Dendritic cell treated with granulocyte-macrophage colony-stimulating factor and Interleukin-4, amounts not matched to agents 40 ng/mL and 50 ng/mL, for 4 days (primary cell): ENCODE measurements at regions of chr11 and their contacts with region 1.

Region 1: DNA sequence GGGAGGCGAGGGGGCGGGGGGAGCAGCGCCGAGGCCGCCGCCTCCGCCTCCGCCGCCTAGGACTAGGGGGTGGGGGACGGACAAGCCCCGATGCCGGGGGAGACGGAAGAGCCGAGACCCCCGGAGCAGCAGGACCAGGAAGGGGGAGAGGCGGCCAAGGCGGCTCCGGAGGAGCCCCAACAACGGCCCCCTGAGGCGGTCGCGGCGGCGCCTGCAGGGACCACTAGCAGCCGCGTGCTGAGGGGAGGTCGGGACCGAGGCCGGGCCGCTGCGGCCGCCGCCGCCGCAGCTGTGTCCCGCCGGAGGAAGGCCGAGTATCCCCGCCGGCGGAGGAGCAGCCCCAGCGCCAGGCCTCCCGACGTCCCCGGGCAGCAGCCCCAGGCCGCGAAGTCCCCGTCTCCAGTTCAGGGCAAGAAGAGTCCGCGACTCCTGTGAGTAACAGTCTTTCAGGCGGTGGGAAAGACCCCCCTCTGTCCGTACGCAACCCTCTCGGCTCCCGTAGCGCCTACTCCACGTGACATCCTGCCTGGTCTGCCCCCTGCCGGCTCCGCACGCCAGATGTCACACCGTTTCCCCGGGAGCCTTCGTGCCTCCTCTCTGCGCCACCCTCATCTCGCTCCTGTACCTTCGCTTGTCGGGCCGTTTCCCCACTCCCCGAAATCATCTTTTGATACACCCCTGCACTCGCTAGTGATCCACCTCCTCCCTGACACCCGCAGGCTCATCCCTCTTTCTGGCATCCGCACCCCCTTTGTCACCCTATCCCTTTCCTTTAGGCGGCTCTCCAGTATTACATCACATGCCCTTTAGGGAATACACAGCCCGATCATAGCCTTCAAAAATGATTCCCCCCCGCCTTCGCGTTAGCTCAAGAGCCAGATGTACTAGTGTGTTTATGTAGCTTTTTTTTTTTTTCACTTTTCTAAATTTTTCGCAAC is 598 bp downstream of the ZFP91 start:
- H3K4me3 Mint-ChIP-seq: peak overlapping the region; percentile 100
- H3K27ac Mint-ChIP-seq: peak overlapping the region; percentile 99
- H3K4me1 Mint-ChIP-seq: peaks cover 36% of the 10 kb centered on the region
- H3K27me3 Mint-ChIP-seq: no peaks in the 10 kb centered on the region

Region 2: DNA sequence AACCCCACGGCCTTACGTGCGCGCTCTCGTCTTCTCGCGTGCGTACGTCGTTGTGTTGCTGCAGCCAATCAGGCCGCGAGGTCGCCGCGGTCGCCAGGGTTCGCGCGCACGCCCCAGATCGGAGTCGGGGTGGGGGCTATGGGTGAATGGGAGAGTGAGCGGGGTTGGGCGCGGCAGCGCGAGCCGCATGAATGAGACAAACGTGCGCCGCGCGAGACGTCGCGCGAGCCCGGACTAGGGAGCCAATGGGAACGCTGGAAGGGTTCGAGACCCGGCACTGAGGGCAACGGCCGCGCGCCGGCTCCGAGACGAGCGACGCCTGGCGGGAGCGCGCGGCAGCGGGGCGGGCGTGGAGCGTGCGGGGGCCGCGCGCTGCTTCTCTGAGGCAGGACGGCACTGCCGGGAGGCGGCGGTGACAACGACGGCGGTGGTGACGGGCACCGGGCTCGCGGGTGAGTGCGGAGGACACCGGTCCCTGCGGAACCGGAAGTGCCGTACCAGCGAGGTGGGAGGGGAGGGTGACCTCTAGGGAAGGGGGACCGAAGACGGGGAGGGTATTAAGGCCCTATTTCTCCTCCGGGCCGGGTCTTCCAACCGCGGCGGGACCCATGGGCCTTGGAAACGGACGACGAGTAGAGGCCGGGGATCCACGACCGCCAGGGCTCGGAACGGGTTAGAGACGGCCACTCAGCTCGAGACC is 911.6 kb before region 1 on chr11 and contains the start of gene ZDHHC5:
- intact Hi-C with region 1: loop called (anchors 2 kb)
- H3K4me3 Mint-ChIP-seq: peak within 1 kb of the TSS; percentile 84
- H3K27ac Mint-ChIP-seq: peak within 1 kb of the TSS; percentile 97
- H3K4me1 Mint-ChIP-seq: peaks cover 40% of the 10 kb centered on the region
- H3K27me3 Mint-ChIP-seq: no peaks in the 10 kb centered on the region

Region 3: GRCh38 chr11:58549644-58550043 is 29.8 kb before region 1 on chr11:
- intact Hi-C with region 1: no loop called
- H3K4me3 Mint-ChIP-seq: no peak overlapping the region
- H3K27ac Mint-ChIP-seq: no peak overlapping the region
- H3K4me1 Mint-ChIP-seq: no peaks in the 10 kb centered on the region
- H3K27me3 Mint-ChIP-seq: no peaks in the 10 kb centered on the region

Region 4: DNA sequence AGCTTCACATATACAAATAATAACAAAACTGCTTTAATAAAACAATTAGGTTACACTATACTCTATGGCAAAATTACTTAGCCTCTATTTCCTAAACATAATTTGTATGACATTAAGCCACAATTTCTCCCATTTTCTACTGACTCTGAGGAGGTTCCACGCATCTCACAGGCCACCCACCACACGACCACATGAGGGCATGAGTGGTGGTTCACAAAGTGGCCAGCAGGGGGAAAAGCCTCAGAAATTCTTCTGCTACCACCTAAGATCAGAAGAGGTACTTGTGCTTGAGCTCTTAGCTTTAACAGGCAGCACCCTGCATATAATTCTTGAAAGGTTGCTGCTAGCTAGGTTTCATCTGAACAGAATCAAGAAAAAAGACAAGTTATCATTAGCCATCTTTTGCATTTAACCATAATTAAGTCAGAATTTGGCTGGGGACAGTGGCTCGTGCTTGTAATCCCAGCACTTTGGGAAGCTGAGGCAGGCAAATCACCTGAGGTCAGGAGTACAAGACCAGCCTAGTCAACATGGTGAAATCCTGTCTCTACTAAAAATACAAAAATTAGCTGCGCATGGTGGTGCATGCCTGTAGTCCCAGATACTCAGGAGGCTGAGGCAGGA is 11.5 kb before region 1 on chr11:
- intact Hi-C with region 1: loop called (anchors 2 kb)
- H3K4me3 Mint-ChIP-seq: no peak overlapping the region
- H3K27ac Mint-ChIP-seq: no peak overlapping the region
- H3K4me1 Mint-ChIP-seq: peaks cover 51% of the 10 kb centered on the region
- H3K27me3 Mint-ChIP-seq: no peaks in the 10 kb centered on the region

Region 5: GRCh38 chr11:58900479-58901420 is 321.3 kb after region 1 on chr11:
- intact Hi-C with region 1: loop called (anchors 10 kb)
- H3K4me3 Mint-ChIP-seq: no peak overlapping the region
- H3K27ac Mint-ChIP-seq: no peak overlapping the region
- H3K4me1 Mint-ChIP-seq: peaks cover 19% of the 10 kb centered on the region
- H3K27me3 Mint-ChIP-seq: peaks cover 49% of the 10 kb centered on the region

Region 6: GRCh38 chr11:59216641-59217564 is 637.4 kb after region 1 on chr11:
- intact Hi-C with region 1: loop called (anchors 10 kb)
- H3K4me3 Mint-ChIP-seq: peak overlapping the region; percentile 23
- H3K27ac Mint-ChIP-seq: peak overlapping the region; percentile 89
- H3K4me1 Mint-ChIP-seq: peaks cover 77% of the 10 kb centered on the region
- H3K27me3 Mint-ChIP-seq: no peaks in the 10 kb centered on the region